ENCODE measurements at regions of chr5 and their contacts with region 1.

Region 1: GRCh38 chr5:172188033-172188892 is at the start of gene STK10:
- DNase-seq: peak; percentile 84 to 95 (median 90)
- ATAC-seq: peak; percentile 75 to 81
- H3K4me3 Mint-ChIP-seq: peak within 1 kb of the TSS; percentile 97 to 100 (median 99)
- H3K27ac Mint-ChIP-seq: peak within 1 kb of the TSS; percentile 95 to 100 (median 98)
- H3K4me1 Mint-ChIP-seq: peaks cover 15 to 39% (median 31%) of the 10 kb centered on the region in 4 donors
- H3K27me3 Mint-ChIP-seq: no peaks in the 10 kb centered on the region
- polyA plus RNA-seq, gene STK10: 44.6 to 128 (median 62.1) TPM

Region 2: DNA sequence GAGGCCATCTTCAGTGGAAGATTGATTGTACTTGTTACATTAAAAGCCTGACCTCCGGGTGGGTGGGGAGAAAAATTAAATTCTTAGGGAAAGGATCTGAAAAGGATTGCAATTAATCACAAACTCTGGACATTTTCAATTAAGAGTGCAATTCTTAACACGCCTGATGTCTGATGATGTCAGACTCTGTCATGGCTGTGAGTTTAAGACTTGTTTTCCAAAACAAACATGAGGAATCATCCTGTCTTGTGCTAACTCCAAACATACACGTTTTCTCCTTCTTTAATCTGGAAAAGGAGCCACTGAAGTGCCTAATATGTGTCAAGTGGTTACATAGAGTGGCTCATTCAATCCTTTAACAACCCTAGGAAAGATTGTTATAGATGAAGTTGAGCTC is 463.1 kb before region 1 on chr5:
- POLR2A ChIA-PET with region 1: no interaction called
- DNase-seq: no peak
- ATAC-seq: no peak
- H3K4me3 Mint-ChIP-seq: no peak overlapping the region
- H3K27ac Mint-ChIP-seq: no peak overlapping the region
- H3K4me1 Mint-ChIP-seq: peaks cover 0 to 5% (median under 1%) of the 10 kb centered on the region in 4 donors
- H3K27me3 Mint-ChIP-seq: peaks cover 3 to 22% (median 8%) of the 10 kb centered on the region in 5 donors

Region 3: GRCh38 chr5:172006321-172007174 is 181.7 kb before region 1 on chr5 and contains the start of gene FBXW11:
- POLR2A ChIA-PET with region 1: interaction called, 38 read pairs
- DNase-seq: peak; percentile 86 to 98 (median 93)
- ATAC-seq: peak; percentile 87 to 89
- H3K4me3 Mint-ChIP-seq: peak within 1 kb of the TSS; percentile 93 to 100 (median 98)
- H3K27ac Mint-ChIP-seq: peak within 1 kb of the TSS; percentile 98 to 100 (median 99)
- H3K4me1 Mint-ChIP-seq: peaks cover 34 to 53% (median 51%) of the 10 kb centered on the region in 4 donors
- H3K27me3 Mint-ChIP-seq: no peaks in the 10 kb centered on the region
- polyA plus RNA-seq, gene FBXW11: 13.5 to 18.3 (median 16.2) TPM

Region 4: DNA sequence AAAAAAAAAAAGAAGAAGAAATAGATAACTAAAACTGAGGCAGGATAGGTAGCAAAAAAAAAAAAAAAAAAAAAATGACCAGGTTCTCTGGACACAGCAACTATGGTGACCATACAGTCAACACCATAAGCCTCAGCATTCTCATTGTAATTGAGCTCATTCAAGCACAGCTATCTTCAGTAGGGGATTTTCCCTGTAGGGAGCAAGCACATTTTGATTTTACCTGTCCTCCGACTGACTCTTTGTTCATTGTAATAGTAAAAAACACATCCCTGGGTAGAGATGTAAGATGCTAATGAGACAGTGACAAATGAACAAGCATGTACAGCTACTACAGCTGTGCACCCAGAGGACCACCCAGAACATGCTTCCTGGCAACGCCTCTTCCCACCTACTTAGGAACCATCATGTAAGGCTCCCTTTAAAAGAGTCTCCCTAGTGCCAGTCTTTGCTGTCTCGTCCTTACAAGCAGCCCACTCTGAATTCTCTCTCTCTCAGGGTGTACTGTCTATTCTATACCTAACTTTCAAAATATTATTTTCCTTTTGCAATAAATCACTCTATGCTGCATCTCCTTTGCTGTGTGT is 116.9 kb before region 1 on chr5:
- POLR2A ChIA-PET with region 1: interaction called, 43 read pairs
- DNase-seq: peak in 2 of 10 donors; percentile 24
- ATAC-seq: peak; percentile 5 to 18
- H3K4me3 Mint-ChIP-seq: peak overlapping the region in 8 of 10 donors; percentile 18 to 77 (median 46)
- H3K27ac Mint-ChIP-seq: peak overlapping the region; percentile 78 to 94 (median 88)
- H3K4me1 Mint-ChIP-seq: peaks cover 21 to 56% (median 53%) of the 10 kb centered on the region in 4 donors
- H3K27me3 Mint-ChIP-seq: no peaks in the 10 kb centered on the region

Region 5: DNA sequence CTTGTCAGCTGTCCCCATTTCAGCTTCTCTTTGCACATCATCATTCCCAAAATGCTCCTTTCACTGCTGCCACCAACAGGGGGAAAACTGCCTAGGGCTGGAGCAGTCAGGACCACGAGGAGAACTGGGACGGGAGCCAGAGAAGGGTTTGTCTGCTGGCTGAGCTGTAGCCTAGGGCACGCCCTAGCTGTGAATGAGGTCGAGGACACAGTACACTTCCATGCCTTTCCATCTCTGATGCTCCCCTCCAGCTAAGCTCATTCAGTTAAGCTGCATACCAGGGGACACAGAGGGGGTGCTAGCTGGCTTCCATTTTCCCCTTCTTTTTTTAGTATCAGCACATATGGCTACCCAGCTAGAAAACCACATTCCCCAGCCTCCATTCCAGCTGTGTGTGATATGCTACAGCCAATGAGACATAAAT is 65.0 kb before region 1 on chr5:
- POLR2A ChIA-PET with region 1: interaction called, 359 read pairs
- DNase-seq: no peak
- ATAC-seq: no peak
- H3K4me3 Mint-ChIP-seq: no peak overlapping the region
- H3K27ac Mint-ChIP-seq: peak overlapping the region; percentile 53 to 89 (median 76)
- H3K4me1 Mint-ChIP-seq: peaks cover 21 to 79% (median 62%) of the 10 kb centered on the region in 4 donors
- H3K27me3 Mint-ChIP-seq: no peaks in the 10 kb centered on the region

Region 6: GRCh38 chr5:172162323-172162986 is 25.8 kb before region 1 on chr5:
- POLR2A ChIA-PET with region 1: interaction called, 17 read pairs
- DNase-seq: no peak
- ATAC-seq: no peak
- H3K4me3 Mint-ChIP-seq: peak overlapping the region in 7 of 10 donors; percentile 5 to 65 (median 47)
- H3K27ac Mint-ChIP-seq: peak overlapping the region; percentile 13 to 92 (median 82)
- H3K4me1 Mint-ChIP-seq: peaks cover 38 to 87% (median 83%) of the 10 kb centered on the region in 4 donors
- H3K27me3 Mint-ChIP-seq: no peaks in the 10 kb centered on the region

Region 7: GRCh38 chr5:173238312-173239232 is 1050.3 kb after region 1 on chr5:
- POLR2A ChIA-PET with region 1: no interaction called
- DNase-seq: no peak
- ATAC-seq: no peak
- H3K4me3 Mint-ChIP-seq: peak overlapping the region; percentile 4 to 82 (median 66)
- H3K27ac Mint-ChIP-seq: peak overlapping the region in 2 of 10 donors; percentile 12 to 42
- H3K4me1 Mint-ChIP-seq: peaks cover 15 to 51% (median 44%) of the 10 kb centered on the region in 4 donors
- H3K27me3 Mint-ChIP-seq: peaks cover 60 to 100% (median 80%) of the 10 kb centered on the region in 5 donors

Measured in naive thymus-derived CD8-positive, alpha-beta T cell (primary cell).